ENCODE measurements at regions of chr9 and their contacts with region 1.

Region 1: DNA sequence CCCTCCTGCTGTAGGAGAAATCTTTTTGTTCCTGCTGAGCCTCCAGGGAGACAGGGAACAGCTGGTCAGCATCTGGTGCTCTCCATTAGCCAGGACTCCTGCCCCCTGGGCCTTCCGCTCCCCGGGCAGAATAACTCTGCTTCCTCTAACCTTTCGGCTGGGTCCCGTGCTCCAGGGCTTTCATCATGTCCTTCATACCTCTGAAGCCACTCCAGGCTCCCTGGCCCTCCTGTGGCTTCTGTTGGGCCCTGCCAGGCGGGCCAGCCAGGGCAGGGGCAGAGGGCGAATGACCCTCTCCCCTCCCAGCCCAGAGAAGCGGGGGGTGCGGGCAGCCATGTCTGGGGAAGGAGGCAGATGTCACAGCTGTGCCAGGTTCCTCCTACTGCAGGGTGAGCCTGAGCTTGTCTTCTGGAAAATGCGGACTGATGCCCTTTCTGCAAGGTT is 81.7 kb upstream of the LMX1B start:
- DNase-seq: no peak
- ATAC-seq: no peak; a peak in 1 of 6 replicates
- H3K4me3 ChIP-seq: no peak overlapping the region
- H3K27ac ChIP-seq: no peak overlapping the region
- H3K4me1 ChIP-seq: no peaks in the 10 kb centered on the region
- CTCF ChIP-seq: no peak
- EP300 ChIP-seq: no peak
- POLR2A ChIP-seq: no peak
- RAD21 ChIP-seq: no peak

Region 2: DNA sequence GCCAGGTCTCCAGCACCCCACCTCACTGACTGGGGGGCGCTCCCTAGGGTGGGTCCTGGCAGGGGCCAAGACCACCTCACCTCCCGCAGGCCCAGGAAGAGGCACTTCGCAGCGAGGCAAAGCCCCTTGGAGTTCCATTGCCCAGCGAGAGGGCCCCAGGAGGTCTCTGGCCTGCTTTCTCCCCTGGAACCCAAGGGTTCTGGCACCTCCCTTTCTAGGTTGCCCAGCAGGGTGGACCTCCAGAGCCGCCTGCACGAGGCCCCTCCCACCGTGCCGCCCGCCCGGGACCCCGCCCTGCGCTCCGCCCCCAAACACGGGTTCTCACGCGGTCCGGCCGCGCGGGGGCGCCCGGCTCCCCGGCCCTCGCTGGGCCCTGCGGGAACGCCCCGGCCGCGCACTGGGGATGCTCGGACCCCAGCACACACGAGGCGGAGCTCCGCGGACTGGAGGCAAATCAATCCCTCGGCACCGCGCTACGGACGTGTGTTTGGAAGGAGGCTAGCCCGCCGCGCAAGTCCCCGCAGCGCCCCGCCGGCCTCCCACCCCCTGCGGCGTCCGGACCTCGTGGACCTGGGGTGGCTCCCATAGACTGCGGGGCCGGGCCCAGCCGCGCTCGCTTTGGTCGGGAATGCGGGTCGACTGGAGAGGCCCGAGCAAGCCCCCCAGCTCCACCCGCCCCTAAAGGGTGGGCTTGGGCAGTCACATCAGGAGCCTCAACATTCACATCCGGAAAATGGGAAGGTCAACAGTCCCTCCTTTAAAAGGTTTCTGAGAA is 17.8 kb before region 1 on chr9:
- CTCF ChIA-PET with region 1: interaction called, 16 read pairs
- POLR2A ChIA-PET with region 1: interaction called, 3 read pairs
- DNase-seq: peak; percentile 67 to 87
- ATAC-seq: peak; percentile 72 to 93
- H3K4me3 ChIP-seq: peak overlapping the region; percentile 43
- H3K27ac ChIP-seq: peak overlapping the region; percentile 43 to 48; a peak in 4 of 6 replicates
- H3K4me1 ChIP-seq: peaks cover 12% of the 10 kb centered on the region; the same call in 2 of the 3 replicates
- CTCF ChIP-seq: peak; percentile 77
- EP300 ChIP-seq: no peak
- POLR2A ChIP-seq: no peak
- RAD21 ChIP-seq: peak; percentile 17 to 40; a peak in 3 of 5 replicates

Measured in A549 (cell line).